ENCODE measurements at regions of chr5 and their contacts with region 1.

Region 1: DNA sequence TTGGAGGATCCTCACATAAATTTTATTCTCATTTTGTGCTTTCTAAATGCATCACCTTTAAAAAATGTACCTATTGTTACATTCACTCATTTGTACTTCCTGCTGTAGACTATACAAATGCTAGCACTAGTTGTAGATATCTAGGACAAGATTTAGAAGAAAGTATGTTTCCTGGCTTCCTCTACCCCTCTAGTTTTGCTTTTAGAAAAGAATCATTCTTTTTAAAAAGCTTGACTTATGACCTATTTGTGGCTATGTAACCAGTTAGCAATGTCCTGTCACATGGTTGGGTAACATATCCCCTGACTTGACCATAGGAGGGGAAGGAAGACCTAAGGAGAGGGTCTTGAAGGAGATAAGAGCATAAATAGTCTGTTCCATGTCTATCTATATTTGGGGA is 13.3 kb downstream of the CAMK4 start:
- DNase-seq: no peak
- ATAC-seq: peak; percentile 10
- H3K4me3 Mint-ChIP-seq: peak overlapping the region; percentile 66
- H3K27ac Mint-ChIP-seq: peak overlapping the region; percentile 87
- H3K4me1 Mint-ChIP-seq: peaks cover 92% of the 10 kb centered on the region
- H3K27me3 Mint-ChIP-seq: no peaks in the 10 kb centered on the region
- CTCF ChIP-seq: no peak

Region 2: DNA sequence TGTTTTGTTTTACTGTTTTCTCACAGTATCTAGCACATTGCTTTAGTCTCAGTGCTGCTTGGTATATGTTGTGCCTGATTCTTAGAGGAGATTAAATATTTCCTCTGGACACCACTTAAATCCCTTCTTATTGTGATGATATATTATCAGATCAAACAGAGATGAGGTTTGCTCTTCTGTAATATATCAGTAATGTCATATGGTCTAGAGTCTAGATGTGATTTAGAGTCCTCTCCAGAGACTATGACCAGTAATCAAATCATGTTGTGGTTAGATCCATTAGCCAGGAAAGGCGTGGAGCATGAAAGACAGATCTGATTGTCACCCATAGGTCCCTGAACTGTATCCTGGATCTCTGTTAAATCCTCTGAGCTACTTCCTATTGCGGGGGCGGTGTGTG is 11.1 kb after region 1 on chr5:
- CTCF ChIA-PET with region 1: interaction called, 49 read pairs
- POLR2A ChIA-PET with region 1: interaction called, 176 read pairs
- intact Hi-C with region 1: no loop called
- DNase-seq: no peak
- ATAC-seq: no peak
- H3K4me3 Mint-ChIP-seq: peak overlapping the region; percentile 18
- H3K27ac Mint-ChIP-seq: peak overlapping the region; percentile 83
- H3K4me1 Mint-ChIP-seq: peaks cover 81% of the 10 kb centered on the region
- H3K27me3 Mint-ChIP-seq: no peaks in the 10 kb centered on the region
- CTCF ChIP-seq: no peak

Measured in activated CD8-positive, alpha-beta T cell treated with anti-CD3 and anti-CD28 coated beads for 36 hours (primary cell).